WTC11 (cell line): ENCODE measurements at regions of chr1 and their contacts with region 1.

Region 1: GRCh38 chr1:41387667-41388091 is 26.4 kb downstream of the FOXO6 start:
- DNase-seq: peak; percentile 84
- ATAC-seq: peak; percentile 92
- H3K4me3 Mint-ChIP-seq: no peak overlapping the region
- H3K27ac Mint-ChIP-seq: peak overlapping the region; percentile 38
- H3K4me1 Mint-ChIP-seq: peaks cover 46% of the 10 kb centered on the region
- H3K27me3 Mint-ChIP-seq: peaks cover 39% of the 10 kb centered on the region
- CTCF ChIP-seq: no peak

Region 2: GRCh38 chr1:41122851-41123507 is 264.7 kb before region 1 on chr1:
- CTCF ChIA-PET with region 1: no interaction called
- POLR2A ChIA-PET with region 1: no interaction called
- DNase-seq: peak; percentile 15
- ATAC-seq: peak; percentile 60
- H3K4me3 Mint-ChIP-seq: no peak overlapping the region
- H3K27ac Mint-ChIP-seq: no peak overlapping the region
- H3K4me1 Mint-ChIP-seq: no peaks in the 10 kb centered on the region
- H3K27me3 Mint-ChIP-seq: no peaks in the 10 kb centered on the region
- CTCF ChIP-seq: no peak

Region 3: GRCh38 chr1:41423511-41424221 is 36.0 kb after region 1 on chr1:
- CTCF ChIA-PET with region 1: interaction called, 46 read pairs
- POLR2A ChIA-PET with region 1: interaction called, 3 read pairs
- DNase-seq: peak; percentile 66
- ATAC-seq: peak; percentile 52
- H3K4me3 Mint-ChIP-seq: no peak overlapping the region
- H3K27ac Mint-ChIP-seq: no peak overlapping the region
- H3K4me1 Mint-ChIP-seq: peaks cover 5% of the 10 kb centered on the region
- H3K27me3 Mint-ChIP-seq: no peaks in the 10 kb centered on the region
- CTCF ChIP-seq: no peak